CD8-positive, alpha-beta T cell (primary cell): ENCODE measurements at regions of chr20 and their contacts with region 1.

Region 1: GRCh38 chr20:44115762-44116644 is 71.0 kb downstream of the JPH2 start:
- DNase-seq: no peak
- ATAC-seq: no peak
- H3K4me3 ChIP-seq: no peak overlapping the region
- H3K4me3 Mint-ChIP-seq: no peak overlapping the region
- H3K27ac ChIP-seq: no peak overlapping the region
- H3K27ac Mint-ChIP-seq: no peak overlapping the region
- H3K4me1 ChIP-seq: peaks cover 3% of the 10 kb centered on the region
- H3K4me1 Mint-ChIP-seq: peaks cover 5% of the 10 kb centered on the region
- H3K27me3 ChIP-seq: peaks cover 0 to 6% of the 10 kb centered on the region in 2 experiments
- H3K27me3 Mint-ChIP-seq: peaks cover 42% of the 10 kb centered on the region
- CTCF ChIP-seq: no peak

Region 2: DNA sequence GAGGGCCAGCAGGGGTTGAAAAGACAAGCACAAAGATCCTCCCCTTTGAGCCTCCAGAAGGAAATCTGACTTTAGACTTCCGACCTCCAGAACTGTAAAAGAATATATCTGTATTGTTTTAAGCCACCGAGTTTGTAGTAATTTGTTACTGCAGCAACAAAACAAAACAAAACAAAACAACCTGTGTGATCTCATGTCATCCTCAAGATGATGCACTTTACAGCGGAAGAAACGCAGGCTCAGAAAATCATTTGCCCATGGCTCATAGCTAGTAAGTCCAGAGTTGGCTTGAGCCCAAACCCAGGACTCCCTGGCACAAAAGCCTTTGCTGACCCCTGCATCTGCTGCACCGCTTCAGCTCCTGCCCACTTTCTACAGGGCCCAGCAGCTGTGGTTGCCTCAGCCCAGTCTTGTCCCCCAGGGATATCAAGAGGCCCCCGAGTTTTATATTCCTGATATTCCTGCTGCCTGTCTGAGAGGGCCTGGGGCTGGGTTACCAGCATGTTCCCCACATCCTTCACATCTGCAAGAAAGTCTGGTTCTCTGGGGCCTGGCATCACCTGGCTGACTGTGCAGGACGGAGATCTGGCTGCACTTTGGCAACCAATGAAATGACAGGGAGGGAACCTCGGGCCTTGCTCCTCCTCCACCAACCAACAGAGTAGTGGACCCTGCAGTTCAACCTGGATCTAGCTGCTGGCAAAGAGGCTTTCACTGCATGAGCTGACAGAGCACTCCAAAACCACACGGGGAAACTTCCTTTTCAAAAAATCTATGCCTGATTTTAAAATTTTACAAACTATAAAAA is 14.1 kb after region 1 on chr20:
- CTCF ChIA-PET with region 1: interaction called, 10 read pairs
- POLR2A ChIA-PET with region 1: no interaction called
- intact Hi-C with region 1: no loop called
- DNase-seq: no peak
- ATAC-seq: no peak
- H3K4me3 ChIP-seq: no peak overlapping the region
- H3K4me3 Mint-ChIP-seq: no peak overlapping the region
- H3K27ac ChIP-seq: no peak overlapping the region
- H3K27ac Mint-ChIP-seq: no peak overlapping the region
- H3K4me1 ChIP-seq: no peaks in the 10 kb centered on the region
- H3K4me1 Mint-ChIP-seq: no peaks in the 10 kb centered on the region
- H3K27me3 ChIP-seq: no peaks in the 10 kb centered on the region
- H3K27me3 Mint-ChIP-seq: peaks cover 7% of the 10 kb centered on the region
- CTCF ChIP-seq: no peak

Region 3: GRCh38 chr20:44151621-44152416 is 35.8 kb after region 1 on chr20:
- CTCF ChIA-PET with region 1: interaction called, 13 read pairs
- POLR2A ChIA-PET with region 1: no interaction called
- intact Hi-C with region 1: no loop called
- DNase-seq: no peak
- ATAC-seq: no peak
- H3K4me3 ChIP-seq: no peak overlapping the region
- H3K4me3 Mint-ChIP-seq: no peak overlapping the region
- H3K27ac ChIP-seq: no peak overlapping the region
- H3K27ac Mint-ChIP-seq: no peak overlapping the region
- H3K4me1 ChIP-seq: peaks cover 9% of the 10 kb centered on the region
- H3K4me1 Mint-ChIP-seq: peaks cover 11% of the 10 kb centered on the region
- H3K27me3 ChIP-seq: no peaks in the 10 kb centered on the region
- H3K27me3 Mint-ChIP-seq: peaks cover 2% of the 10 kb centered on the region
- CTCF ChIP-seq: no peak

Region 4: DNA sequence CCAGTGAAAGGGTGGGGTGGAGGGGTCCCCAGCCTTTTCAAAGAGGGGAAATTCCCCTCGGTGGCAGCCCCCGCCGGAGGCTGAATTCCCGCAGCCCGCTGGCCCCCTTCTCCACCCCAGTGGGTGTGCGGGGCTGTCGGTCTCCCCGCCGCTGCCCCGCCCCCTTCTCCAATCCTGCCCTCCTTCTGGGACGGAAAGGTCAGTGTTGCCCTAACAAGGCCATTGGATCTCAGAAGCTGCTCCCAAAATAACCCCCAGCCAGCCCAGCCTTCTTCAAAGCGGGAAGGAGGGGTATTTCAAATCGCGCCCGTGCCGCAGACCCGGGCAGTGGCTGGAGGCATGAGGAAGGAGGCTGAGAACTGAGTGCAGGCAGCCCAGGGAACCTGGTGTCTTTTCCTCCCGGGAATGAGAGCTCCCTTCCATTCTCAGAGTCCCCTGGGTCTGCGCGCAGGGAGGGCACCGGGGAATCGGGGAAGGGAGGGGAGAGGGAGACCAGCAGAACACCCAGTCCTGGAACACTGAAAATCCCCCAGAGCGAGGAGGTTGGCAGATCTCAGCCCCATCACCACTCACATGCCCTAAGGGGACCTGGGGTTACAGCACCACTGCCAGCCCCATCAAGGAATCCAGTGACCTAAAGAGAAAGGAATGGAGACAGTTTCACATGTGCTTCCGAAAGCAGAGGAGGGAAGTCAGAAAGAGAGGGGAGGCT is 71.2 kb after region 1 on chr20 and contains the start of gene JPH2:
- CTCF ChIA-PET with region 1: interaction called, 87 read pairs
- POLR2A ChIA-PET with region 1: no interaction called
- intact Hi-C with region 1: loop called in 1 of 2 experiments (anchors 1 kb)
- DNase-seq: no peak
- ATAC-seq: peak; percentile 11
- H3K4me3 ChIP-seq: peak within 1 kb of the TSS in 1 of 2 experiments; percentile 29
- H3K4me3 Mint-ChIP-seq: peak within 1 kb of the TSS; percentile 16
- H3K27ac ChIP-seq: no peak within 1 kb of the TSS
- H3K27ac Mint-ChIP-seq: no peak within 1 kb of the TSS
- H3K4me1 ChIP-seq: peaks cover 16% of the 10 kb centered on the region
- H3K4me1 Mint-ChIP-seq: peaks cover 9% of the 10 kb centered on the region
- H3K27me3 ChIP-seq: peaks cover 19 to 23% of the 10 kb centered on the region in 2 experiments
- H3K27me3 Mint-ChIP-seq: peaks cover 49% of the 10 kb centered on the region
- CTCF ChIP-seq: no peak
- total RNA-seq, gene JPH2: not detected

Region 5: DNA sequence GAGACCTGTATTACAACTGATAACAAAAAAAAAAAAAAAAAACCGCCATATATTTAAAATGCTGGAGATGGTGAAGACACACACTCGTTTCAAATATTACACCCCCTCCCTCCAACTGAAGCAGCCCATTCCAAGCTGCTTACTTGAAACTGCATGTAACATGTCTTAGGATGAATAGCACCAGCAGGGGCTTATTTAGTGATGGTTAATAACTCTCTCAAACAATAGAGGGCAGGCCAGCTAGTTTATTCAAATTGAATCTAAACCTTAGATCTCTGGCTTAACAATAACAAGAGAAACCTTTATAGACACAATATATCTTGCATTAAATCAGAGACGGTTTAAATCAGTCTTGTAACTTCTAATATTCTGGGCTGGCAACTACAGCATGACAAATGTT is 80.3 kb after region 1 on chr20:
- CTCF ChIA-PET with region 1: interaction called, 87 read pairs
- POLR2A ChIA-PET with region 1: no interaction called
- intact Hi-C with region 1: no loop called
- DNase-seq: no peak
- ATAC-seq: peak; percentile 61
- H3K4me3 ChIP-seq: no peak overlapping the region
- H3K4me3 Mint-ChIP-seq: no peak overlapping the region
- H3K27ac ChIP-seq: no peak overlapping the region
- H3K27ac Mint-ChIP-seq: no peak overlapping the region
- H3K4me1 ChIP-seq: no peaks in the 10 kb centered on the region
- H3K4me1 Mint-ChIP-seq: peaks cover 24% of the 10 kb centered on the region
- H3K27me3 ChIP-seq: no peaks in the 10 kb centered on the region
- H3K27me3 Mint-ChIP-seq: no peaks in the 10 kb centered on the region
- CTCF ChIP-seq: no peak

Region 6: DNA sequence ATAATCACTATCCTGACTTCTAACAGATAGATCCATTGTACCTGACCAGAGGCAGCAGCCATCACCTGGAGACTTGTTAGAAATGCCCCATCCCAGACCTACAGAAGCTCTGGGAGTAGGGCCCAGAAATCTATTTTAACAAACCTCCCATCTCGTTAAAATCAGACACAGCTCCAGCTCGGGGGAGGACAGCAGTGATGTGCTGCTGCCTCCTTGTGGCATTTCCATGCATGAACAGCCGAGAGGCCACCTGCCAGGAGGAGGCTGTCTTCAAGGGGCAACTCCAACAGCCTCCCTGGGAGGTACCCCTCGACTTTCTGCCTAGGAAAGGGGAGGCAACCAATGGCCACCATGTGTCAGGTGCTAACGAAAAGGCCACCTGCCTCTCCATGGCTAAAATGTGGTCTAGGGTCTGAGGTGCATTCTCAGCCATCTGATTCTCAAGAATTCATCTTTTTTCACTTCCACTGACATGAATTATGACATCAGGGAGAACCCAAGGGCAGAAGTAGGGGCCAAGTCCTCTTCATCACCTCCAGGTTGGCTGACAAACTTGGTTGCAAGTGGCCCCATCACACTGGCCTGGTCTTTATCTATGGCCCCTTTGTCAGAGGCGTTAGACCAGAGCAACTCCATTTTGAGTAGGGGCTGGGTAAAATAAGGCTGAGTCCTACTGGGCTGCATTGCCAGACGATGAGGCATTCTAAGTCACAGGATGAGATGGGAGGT is 617.5 kb after region 1 on chr20:
- CTCF ChIA-PET with region 1: no interaction called
- POLR2A ChIA-PET with region 1: no interaction called
- intact Hi-C with region 1: loop called in 1 of 2 experiments (anchors 2 kb)
- DNase-seq: peak; percentile 29 to 78 (median 56)
- ATAC-seq: peak; percentile 85
- H3K4me3 ChIP-seq: no peak overlapping the region
- H3K4me3 Mint-ChIP-seq: no peak overlapping the region
- H3K27ac ChIP-seq: no peak overlapping the region
- H3K27ac Mint-ChIP-seq: no peak overlapping the region
- H3K4me1 ChIP-seq: peaks cover 7% of the 10 kb centered on the region
- H3K4me1 Mint-ChIP-seq: peaks cover 14% of the 10 kb centered on the region
- H3K27me3 ChIP-seq: no peaks in the 10 kb centered on the region
- H3K27me3 Mint-ChIP-seq: no peaks in the 10 kb centered on the region
- CTCF ChIP-seq: peak; percentile 71

Region 7: GRCh38 chr20:44866703-44867335 is 750.8 kb after region 1 on chr20:
- CTCF ChIA-PET with region 1: no interaction called
- POLR2A ChIA-PET with region 1: no interaction called
- intact Hi-C with region 1: loop called in 1 of 2 experiments (anchors 5 kb)
- DNase-seq: no peak
- ATAC-seq: no peak
- H3K4me3 ChIP-seq: no peak overlapping the region
- H3K4me3 Mint-ChIP-seq: peak overlapping the region; percentile 65
- H3K27ac ChIP-seq: no peak overlapping the region
- H3K27ac Mint-ChIP-seq: no peak overlapping the region
- H3K4me1 ChIP-seq: peaks cover 7% of the 10 kb centered on the region
- H3K4me1 Mint-ChIP-seq: peaks cover 15% of the 10 kb centered on the region
- H3K27me3 ChIP-seq: no peaks in the 10 kb centered on the region
- H3K27me3 Mint-ChIP-seq: peaks cover 6% of the 10 kb centered on the region
- CTCF ChIP-seq: no peak